Activated CD4-positive, alpha-beta T cell treated with anti-CD3 and anti-CD28 coated beads for 36 hours (primary cell): ENCODE measurements at regions of chr1 and their contacts with region 1.

Region 1: DNA sequence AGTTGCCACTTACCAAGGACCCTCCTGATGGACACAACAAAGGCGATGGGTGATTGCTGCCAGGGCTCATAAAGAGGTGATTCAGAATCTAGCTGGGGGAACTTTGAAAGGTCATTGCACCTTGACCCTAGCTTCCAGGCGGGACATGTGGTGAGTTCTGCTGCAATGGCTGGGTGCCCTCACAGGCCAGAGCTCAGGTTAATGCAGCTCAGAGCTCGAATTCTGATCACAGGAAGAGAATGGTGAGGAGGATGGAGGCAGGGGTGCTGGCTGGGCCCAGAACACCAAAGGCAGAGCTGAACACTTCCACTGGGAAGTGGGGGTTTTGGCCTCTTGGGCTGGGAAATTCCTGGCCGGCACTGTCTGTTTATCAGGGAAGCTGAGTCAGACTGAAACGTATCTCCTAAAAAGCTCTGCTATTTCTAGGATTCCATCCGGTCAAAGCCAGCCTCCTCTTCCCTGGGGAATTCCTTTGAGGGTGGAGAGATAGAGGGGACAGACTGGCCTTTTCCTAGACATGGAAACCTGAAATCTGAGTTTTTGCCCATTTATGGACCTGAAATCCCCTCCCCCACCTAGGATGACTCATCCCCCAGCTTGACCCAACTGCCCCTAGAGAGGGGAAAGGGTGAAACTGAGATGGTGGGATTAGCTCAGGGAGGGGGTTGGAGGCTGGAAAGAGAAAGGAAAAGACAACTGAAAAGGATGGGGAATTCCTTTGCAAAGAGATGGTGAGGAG is 27.2 kb downstream of the NUAK2 start:
- DNase-seq: no peak
- ATAC-seq: no peak
- H3K4me3 Mint-ChIP-seq: no peak overlapping the region
- H3K27ac Mint-ChIP-seq: peak overlapping the region; percentile 33
- H3K4me1 Mint-ChIP-seq: peaks cover 49% of the 10 kb centered on the region
- H3K27me3 Mint-ChIP-seq: no peaks in the 10 kb centered on the region

Region 2: DNA sequence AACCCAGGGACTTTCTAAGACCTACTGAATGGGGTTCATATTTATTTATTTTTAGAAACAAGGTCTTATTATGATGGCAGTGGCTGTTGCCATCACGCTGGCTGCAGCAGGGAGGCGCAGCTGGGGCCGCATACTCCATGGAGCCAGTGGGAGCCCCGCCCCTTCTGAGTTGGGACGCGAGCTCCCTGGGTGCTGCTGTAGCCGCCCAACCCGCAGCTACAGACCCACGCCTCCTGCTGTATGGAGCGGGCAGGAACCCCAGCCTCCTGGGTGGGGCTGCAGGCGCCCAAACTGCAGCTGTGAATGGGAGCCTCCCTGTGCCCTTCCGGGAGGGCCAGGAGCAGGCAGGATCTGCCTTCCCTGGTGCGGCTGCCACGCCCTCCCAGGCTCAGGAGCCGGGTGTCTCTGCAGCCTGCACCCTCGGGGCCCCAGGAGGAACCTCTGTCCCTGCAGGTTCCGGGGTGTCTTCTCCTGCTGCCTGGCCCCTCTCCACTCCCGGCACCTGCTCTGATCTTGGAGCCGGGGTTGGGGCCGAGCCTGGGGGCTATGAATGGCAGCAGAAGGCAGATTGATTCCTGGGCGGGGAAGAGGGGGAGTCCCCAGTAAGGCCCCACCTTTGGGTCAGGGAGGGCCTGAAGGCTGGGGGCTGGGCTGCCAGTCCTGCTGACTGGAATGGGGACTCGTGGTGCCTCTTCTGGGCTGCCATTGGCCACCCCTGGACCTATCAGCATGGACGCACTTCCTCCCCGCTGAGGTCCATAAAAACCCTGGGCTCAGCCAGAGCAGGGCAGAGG is 542.3 kb before region 1 on chr1:
- CTCF ChIA-PET with region 1: no interaction called
- POLR2A ChIA-PET with region 1: no interaction called
- intact Hi-C with region 1: no loop called
- DNase-seq: no peak
- ATAC-seq: no peak
- H3K4me3 Mint-ChIP-seq: no peak overlapping the region
- H3K27ac Mint-ChIP-seq: no peak overlapping the region
- H3K4me1 Mint-ChIP-seq: no peaks in the 10 kb centered on the region
- H3K27me3 Mint-ChIP-seq: no peaks in the 10 kb centered on the region

Region 3: DNA sequence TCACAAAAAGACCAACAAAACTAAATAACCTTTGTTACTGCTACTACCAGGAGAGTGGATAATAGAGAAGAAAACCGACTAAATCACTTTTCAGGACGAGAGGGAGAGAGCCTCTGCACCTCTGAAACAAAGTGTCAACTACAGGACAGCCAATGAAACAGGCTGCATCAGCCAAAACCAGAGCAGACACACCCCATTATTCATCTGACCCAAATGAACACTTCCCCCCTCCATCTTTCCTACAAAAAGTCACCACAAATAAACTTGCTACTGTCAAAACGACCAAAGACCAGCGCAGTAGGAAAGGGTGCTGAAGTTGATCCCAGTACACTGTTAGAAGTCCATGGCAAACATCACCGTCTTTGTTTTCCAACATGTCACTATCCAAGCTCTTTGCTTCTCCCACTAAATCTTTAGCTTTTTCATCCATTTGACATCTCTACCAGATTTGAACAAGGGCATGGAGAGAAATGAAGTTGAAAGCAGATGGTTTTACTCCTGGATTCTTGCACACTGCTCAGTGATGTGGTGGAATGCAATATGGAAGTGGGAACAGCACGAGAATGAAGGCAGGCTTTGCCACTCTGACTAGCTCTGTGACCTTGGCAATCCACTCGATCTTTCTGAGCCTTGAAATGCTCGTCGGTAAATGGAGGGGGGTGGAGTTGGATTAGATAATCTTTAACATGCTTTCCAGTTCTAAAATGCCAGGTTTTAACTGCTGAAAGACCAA is 103.3 kb before region 1 on chr1:
- CTCF ChIA-PET with region 1: no interaction called
- POLR2A ChIA-PET with region 1: no interaction called
- intact Hi-C with region 1: no loop called
- DNase-seq: no peak
- ATAC-seq: no peak
- H3K4me3 Mint-ChIP-seq: no peak overlapping the region
- H3K27ac Mint-ChIP-seq: no peak overlapping the region
- H3K4me1 Mint-ChIP-seq: peaks cover 66% of the 10 kb centered on the region
- H3K27me3 Mint-ChIP-seq: no peaks in the 10 kb centered on the region

Region 4: DNA sequence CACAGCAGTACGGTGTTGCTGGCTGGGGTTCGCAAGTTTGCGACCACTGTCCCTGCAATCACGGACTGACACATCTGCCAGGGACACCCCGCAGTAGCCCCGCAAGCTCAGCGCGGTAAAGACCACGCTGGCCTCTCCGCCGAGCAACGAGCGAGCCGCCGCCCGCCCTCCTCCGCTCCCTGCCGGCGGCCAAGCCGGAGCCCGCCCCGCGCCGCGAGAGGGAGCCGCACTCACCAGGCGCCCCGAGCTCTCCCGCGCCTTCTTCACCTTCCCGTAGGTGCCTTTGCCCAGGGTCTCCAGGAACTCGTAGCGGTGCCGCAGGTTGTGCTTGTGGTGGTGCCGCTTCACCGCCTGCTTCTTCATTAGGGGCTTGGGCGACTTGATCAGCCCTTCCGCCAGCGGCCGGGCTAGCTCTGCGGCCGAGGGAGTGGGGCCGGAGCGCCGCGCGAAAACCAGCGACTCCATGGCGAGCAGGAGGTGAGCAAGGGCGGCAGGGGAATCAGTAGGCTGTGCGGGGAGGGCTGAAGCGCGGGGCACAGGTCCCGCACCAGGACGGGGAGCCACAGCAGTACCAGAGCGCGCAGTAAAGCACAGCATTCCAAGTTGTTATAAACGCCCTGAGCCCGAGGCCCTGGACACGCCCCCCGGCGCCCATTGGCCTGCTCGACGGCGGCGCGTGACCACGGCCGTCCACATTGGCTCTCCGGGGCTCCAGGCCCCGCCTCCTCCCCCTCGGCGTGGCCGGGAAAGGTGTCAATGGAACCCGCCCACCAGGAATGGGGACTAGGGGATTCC is 27.0 kb after region 1 on chr1 and contains the start of gene NUAK2:
- CTCF ChIA-PET with region 1: interaction called, 760 read pairs
- POLR2A ChIA-PET with region 1: interaction called, 3 read pairs
- intact Hi-C with region 1: no loop called
- DNase-seq: peak; percentile 90
- ATAC-seq: peak; percentile 85
- H3K4me3 Mint-ChIP-seq: peak within 1 kb of the TSS; percentile 88
- H3K27ac Mint-ChIP-seq: peak within 1 kb of the TSS; percentile 90
- H3K4me1 Mint-ChIP-seq: peaks cover 65% of the 10 kb centered on the region
- H3K27me3 Mint-ChIP-seq: no peaks in the 10 kb centered on the region
- total RNA-seq, gene NUAK2: 2.3 to 2.7 TPM